GM10248 (cell line): ENCODE measurements at regions of chr5 and their contacts with region 1.

Region 1: GRCh38 chr5:74212336-74212735 is 428.2 kb downstream of the ENC1 start:
- DNase-seq: peak; percentile 15
- CTCF ChIP-seq: no peak

Region 2: GRCh38 chr5:74201334-74202081 is 10.8 kb before region 1 on chr5:
- CTCF ChIA-PET with region 1: interaction called, 11 read pairs
- POLR2A ChIA-PET with region 1: no interaction called
- DNase-seq: peak; percentile 39
- CTCF ChIP-seq: no peak

Region 3: GRCh38 chr5:74482990-74483389 is 270.7 kb after region 1 on chr5:
- CTCF ChIA-PET with region 1: no interaction called
- POLR2A ChIA-PET with region 1: no interaction called
- DNase-seq: no peak
- CTCF ChIP-seq: no peak